ENCODE measurements at regions of chr4 and their contacts with region 1.

Region 1: GRCh38 chr4:76305971-76306881 is at the start of gene STBD1:
- DNase-seq: peak; percentile 48
- ATAC-seq: peak; percentile 47
- H3K4me3 Mint-ChIP-seq: peak within 1 kb of the TSS; percentile 61
- H3K27ac Mint-ChIP-seq: peak within 1 kb of the TSS; percentile 57
- H3K4me1 Mint-ChIP-seq: peaks cover 42% of the 10 kb centered on the region
- H3K27me3 Mint-ChIP-seq: peaks cover 53% of the 10 kb centered on the region
- total RNA-seq, gene STBD1: 0.52 to 1.2 TPM

Region 2: DNA sequence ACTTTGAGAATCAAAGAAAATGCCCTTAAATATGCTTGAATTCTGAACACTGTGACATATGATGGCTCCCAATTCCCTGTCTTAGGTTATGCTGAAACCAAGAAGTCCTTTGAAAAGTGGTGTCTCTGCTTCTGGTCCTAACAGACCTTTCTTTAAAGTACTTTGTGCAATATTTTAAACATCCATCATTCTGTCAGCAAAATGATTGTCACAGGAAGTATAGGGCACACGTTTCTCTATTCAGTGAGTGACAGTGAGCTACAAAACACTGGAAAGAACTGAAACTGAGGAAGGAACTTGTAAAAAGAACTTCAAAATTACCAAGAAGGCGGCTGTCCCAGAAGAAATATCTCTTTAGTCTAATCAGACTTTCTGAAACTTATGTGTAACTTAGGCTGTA is 145.9 kb before region 1 on chr4:
- CTCF ChIA-PET with region 1: no interaction called
- DNase-seq: no peak
- ATAC-seq: no peak
- H3K4me3 Mint-ChIP-seq: no peak overlapping the region
- H3K27ac Mint-ChIP-seq: no peak overlapping the region
- H3K4me1 Mint-ChIP-seq: no peaks in the 10 kb centered on the region
- H3K27me3 Mint-ChIP-seq: no peaks in the 10 kb centered on the region

Region 3: DNA sequence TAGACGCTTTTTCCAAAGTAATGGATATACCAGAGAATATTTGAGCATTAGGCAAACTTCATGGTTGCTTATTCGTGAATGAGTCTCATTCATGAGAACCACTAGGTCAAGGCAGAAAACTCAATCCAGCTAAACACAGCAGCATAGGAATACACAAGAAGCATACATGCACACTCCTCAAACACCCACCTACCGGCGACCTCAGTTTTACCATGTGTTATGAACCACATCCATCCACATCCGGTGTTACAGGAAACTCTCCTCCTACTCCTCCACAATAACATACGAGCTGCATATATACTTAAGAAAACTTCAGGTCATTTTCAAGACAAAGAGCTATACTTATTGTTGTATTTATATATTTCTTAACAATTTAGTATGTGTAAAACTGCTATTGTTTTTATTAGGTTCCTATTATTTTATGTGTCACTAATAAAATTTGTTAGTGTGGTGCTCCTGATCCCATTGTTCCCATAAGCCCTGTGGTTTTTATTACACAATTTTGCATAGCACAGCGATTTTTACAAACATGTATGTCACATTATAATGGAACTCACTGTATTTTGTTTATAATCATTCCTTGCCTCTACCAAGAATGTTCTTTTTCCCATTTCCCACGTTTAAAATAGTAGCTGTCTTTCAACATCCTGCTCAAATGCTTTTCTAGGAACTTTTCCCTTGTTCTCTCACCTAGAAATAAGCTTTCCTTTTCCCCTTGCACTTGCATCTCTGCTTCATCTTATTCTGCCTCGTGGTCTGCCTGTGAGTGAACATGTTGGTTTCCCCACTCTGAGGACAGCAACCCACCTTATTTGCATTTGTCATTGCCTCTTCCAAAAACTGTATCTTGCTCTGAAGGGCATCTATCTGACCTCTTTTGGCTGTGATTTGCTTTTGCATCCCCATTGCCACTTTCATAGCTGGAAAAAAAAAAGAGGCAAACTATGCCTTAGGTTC is 48.6 kb after region 1 on chr4:
- CTCF ChIA-PET with region 1: interaction called, 16 read pairs
- DNase-seq: peak; percentile 77
- ATAC-seq: peak; percentile 92
- H3K4me3 Mint-ChIP-seq: no peak overlapping the region
- H3K27ac Mint-ChIP-seq: peak overlapping the region; percentile 57
- H3K4me1 Mint-ChIP-seq: peaks cover 22% of the 10 kb centered on the region
- H3K27me3 Mint-ChIP-seq: peaks cover 7% of the 10 kb centered on the region

Region 4: GRCh38 chr4:76607266-76607799 is 301.1 kb after region 1 on chr4:
- CTCF ChIA-PET with region 1: no interaction called
- DNase-seq: no peak
- ATAC-seq: no peak
- H3K4me3 Mint-ChIP-seq: no peak overlapping the region
- H3K27ac Mint-ChIP-seq: no peak overlapping the region
- H3K4me1 Mint-ChIP-seq: peaks cover 6% of the 10 kb centered on the region
- H3K27me3 Mint-ChIP-seq: peaks cover 21% of the 10 kb centered on the region